HCT116 (cell line): ENCODE measurements at regions of chr6 and their contacts with region 1.

Region 1: GRCh38 chr6:76706631-76707030 is 634.2 kb upstream of the IMPG1 start:
- DNase-seq: no peak
- ATAC-seq: no peak
- H3K4me3 ChIP-seq: no peak overlapping the region
- H3K27ac ChIP-seq: no peak overlapping the region
- H3K4me1 ChIP-seq: no peaks in the 10 kb centered on the region
- H3K27me3 ChIP-seq: no peaks in the 10 kb centered on the region
- CTCF ChIP-seq: no peak
- POLR2A ChIP-seq: no peak
- RAD21 ChIP-seq: no peak

Region 2: GRCh38 chr6:75775219-75775618 is 931.4 kb before region 1 on chr6:
- CTCF ChIA-PET with region 1: no interaction called
- POLR2A ChIA-PET with region 1: no interaction called
- RAD21 ChIA-PET with region 1: no interaction called
- intact Hi-C with region 1: no loop called
- DNase-seq: no peak
- ATAC-seq: no peak
- H3K4me3 ChIP-seq: no peak overlapping the region
- H3K27ac ChIP-seq: no peak overlapping the region
- H3K4me1 ChIP-seq: peaks cover 3 to 5% of the 10 kb centered on the region in 2 experiments; a peak in 1 of 4 replicates
- H3K27me3 ChIP-seq: no peaks in the 10 kb centered on the region
- CTCF ChIP-seq: no peak
- POLR2A ChIP-seq: no peak
- RAD21 ChIP-seq: no peak

Region 3: DNA sequence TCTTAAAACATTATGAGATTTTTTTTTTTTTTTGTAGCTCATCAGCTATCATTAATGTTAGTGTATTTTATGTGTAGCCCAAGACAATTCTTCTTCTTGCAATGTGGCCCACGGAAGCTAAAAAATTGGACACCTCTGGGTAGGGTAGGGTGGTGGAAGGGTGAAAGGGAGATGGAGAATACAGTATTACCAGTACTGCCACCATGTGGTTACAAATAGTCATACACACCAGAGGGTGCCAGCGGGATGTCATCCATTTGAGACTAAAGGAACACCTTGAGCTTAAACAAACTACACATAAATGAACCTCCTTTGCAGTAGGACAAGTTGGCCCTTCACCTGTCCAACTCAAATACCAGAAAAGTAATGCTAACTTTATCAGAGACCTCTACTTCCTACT is 154.8 kb after region 1 on chr6:
- CTCF ChIA-PET with region 1: no interaction called
- POLR2A ChIA-PET with region 1: no interaction called
- RAD21 ChIA-PET with region 1: no interaction called
- intact Hi-C with region 1: loop called (anchors 5 kb)
- DNase-seq: peak; percentile 7
- ATAC-seq: peak; percentile 85
- H3K4me3 ChIP-seq: no peak overlapping the region
- H3K27ac ChIP-seq: no peak overlapping the region
- H3K4me1 ChIP-seq: no peaks in the 10 kb centered on the region
- H3K27me3 ChIP-seq: no peaks in the 10 kb centered on the region
- CTCF ChIP-seq: peak; percentile 15 to 48 (median 40); a peak in 3 of 6 replicates
- POLR2A ChIP-seq: no peak
- RAD21 ChIP-seq: peak; percentile 27